ENCODE measurements at regions of chr14 and their contacts with region 1.

Region 1: DNA sequence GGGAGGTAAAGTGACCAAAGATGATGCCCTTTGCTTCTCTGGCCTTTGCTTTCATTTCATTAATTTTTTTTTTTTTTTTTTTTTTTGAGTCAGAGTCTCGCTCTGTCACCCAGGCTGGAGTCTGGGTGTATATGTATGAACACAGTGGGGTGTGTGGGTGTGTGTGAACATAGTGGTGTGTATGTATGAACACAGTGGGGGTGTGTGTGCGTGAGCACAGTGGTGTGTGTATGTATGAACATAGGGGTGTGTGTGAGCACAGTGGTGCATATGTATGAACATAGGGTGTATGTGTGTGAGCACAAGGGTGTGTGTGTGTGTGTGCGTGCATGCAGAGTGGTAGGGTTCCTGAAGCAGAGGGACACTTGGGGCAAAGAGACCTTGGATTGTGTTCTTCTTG is 9.6 kb downstream of the KLC1 start:
- DNase-seq: no peak
- H3K4me3 ChIP-seq: no peak overlapping the region
- H3K27ac ChIP-seq: no peak overlapping the region
- H3K4me1 ChIP-seq: no peaks in the 10 kb centered on the region
- H3K27me3 ChIP-seq: no peaks in the 10 kb centered on the region
- CTCF ChIP-seq: no peak
- POLR2A ChIP-seq: no peak

Region 2: GRCh38 chr14:103600503-103600902 is 38.1 kb before region 1 on chr14:
- intact Hi-C with region 1: loop called (anchors 2 kb)
- DNase-seq: no peak
- H3K4me3 ChIP-seq: no peak overlapping the region
- H3K27ac ChIP-seq: no peak overlapping the region
- H3K4me1 ChIP-seq: no peaks in the 10 kb centered on the region
- H3K27me3 ChIP-seq: no peaks in the 10 kb centered on the region
- CTCF ChIP-seq: no peak
- POLR2A ChIP-seq: no peak

Region 3: DNA sequence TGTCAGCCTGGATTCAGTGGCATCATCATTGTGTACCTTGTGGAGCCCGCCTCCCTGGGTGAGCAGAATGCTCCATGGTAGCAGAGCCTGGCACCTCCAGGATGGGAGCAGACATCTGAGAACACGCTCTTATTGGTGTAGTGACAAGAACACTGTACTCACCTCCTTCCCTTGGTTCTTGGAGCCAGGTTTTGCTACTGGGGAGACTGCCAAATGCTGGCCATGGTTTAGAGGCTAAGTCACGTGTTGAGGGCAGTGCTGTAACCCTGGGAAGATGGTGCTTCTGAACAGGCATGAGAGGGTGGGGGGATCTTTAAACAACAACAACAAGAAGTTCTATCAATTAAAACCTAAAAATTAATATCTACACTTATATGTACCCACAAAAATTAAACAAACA is 399.3 kb after region 1 on chr14:
- intact Hi-C with region 1: no loop called
- DNase-seq: no peak
- H3K4me3 ChIP-seq: no peak overlapping the region
- H3K27ac ChIP-seq: no peak overlapping the region
- H3K4me1 ChIP-seq: no peaks in the 10 kb centered on the region
- H3K27me3 ChIP-seq: peaks cover 0 to 21% of the 10 kb centered on the region in 2 donors
- CTCF ChIP-seq: no peak
- POLR2A ChIP-seq: no peak

Measured in breast epithelium (tissue), 4 donors.